Activated naive CD4-positive, alpha-beta T cell treated with anti-CD3 and anti-CD28 coated beads for 36 hours (primary cell): ENCODE measurements at regions of chr11 and their contacts with region 1.

Region 1: DNA sequence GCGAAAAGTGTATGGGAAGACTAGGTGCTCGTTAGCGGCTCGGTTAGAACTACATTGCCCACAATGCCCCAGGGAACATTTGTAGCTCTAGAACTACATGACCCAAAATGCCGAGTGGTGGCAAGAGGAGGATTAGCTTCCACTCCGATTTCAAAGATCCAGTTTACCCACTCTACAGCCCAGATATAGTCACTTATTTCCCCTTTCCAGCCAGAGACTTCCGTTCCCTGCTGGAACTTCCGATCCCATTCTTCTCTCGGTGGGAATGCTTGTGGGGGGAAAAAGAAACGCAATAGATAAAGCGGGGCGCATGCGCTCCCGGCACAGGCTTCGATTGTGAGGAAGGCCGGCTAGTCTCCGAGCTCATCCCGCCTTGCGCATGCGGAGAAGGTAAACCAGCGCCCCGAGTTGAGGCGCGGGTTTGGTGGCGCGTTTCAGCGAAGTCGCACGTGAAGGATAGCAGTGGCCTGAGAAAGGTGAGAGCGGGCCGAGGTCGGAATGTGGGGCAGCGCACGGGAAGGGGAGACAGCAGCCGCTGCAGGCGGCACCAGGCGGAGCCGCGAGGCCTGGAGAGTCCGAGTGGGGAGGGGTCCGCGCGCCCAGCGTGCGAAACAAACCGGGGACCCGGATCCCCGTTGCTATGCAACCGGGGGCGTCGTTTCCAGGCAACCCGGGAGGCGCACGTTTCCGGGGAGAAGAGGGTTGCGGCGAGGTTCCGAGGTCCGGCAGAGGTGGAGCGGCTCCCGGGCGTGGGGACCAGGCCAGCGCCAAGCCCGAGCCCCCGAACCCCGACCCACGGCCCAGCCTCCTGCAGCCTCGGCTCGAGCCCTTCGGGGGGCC is at the start of gene TMEM109:
- DNase-seq: peak; percentile 89
- H3K4me3 Mint-ChIP-seq: peak within 1 kb of the TSS; percentile 94
- H3K27ac Mint-ChIP-seq: peak within 1 kb of the TSS; percentile 95
- H3K4me1 Mint-ChIP-seq: peaks cover 62% of the 10 kb centered on the region
- H3K27me3 Mint-ChIP-seq: no peaks in the 10 kb centered on the region
- total RNA-seq, gene TMEM109: 94.0 to 103 TPM

Region 2: GRCh38 chr11:60939855-60940254 is 25.8 kb after region 1 on chr11:
- CTCF ChIA-PET with region 1: interaction called, 18 read pairs
- intact Hi-C with region 1: no loop called
- DNase-seq: no peak
- H3K4me3 Mint-ChIP-seq: no peak overlapping the region
- H3K27ac Mint-ChIP-seq: no peak overlapping the region
- H3K4me1 Mint-ChIP-seq: peaks cover 5% of the 10 kb centered on the region
- H3K27me3 Mint-ChIP-seq: no peaks in the 10 kb centered on the region

Region 3: GRCh38 chr11:61021661-61022212 is 107.7 kb after region 1 on chr11:
- CTCF ChIA-PET with region 1: no interaction called
- intact Hi-C with region 1: loop called (anchors 1 kb)
- DNase-seq: peak; percentile 97
- H3K4me3 Mint-ChIP-seq: peak overlapping the region; percentile 81
- H3K27ac Mint-ChIP-seq: peak overlapping the region; percentile 100
- H3K4me1 Mint-ChIP-seq: peaks cover 78% of the 10 kb centered on the region
- H3K27me3 Mint-ChIP-seq: no peaks in the 10 kb centered on the region

Region 4: DNA sequence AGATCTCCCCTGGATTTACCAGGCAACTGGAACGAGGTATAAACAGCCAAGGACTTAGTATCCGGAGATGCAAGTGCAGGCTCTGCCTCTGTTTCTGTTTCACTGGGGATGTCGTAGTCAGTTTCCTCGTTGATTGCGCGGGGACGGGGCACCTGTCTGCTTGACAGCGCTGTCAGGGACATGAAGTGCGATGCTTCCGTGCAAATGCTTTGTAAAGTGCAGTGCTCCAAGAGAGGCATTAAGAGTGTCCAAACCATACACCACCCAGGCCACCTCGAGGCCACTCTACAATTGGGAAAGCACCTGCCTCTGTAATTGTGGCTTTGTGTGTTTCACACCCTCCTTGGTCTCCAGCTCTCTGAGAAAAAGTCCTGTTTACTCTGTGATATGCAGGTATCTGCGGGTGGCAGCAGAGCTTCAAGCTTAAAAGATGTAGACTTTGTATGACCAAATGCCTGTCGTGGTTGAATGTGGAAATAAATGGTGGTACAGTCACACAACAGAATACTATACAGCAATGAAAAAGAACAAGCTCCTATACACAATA is 169.7 kb after region 1 on chr11:
- CTCF ChIA-PET with region 1: no interaction called
- intact Hi-C with region 1: loop called (anchors 2 kb)
- DNase-seq: peak; percentile 89
- H3K4me3 Mint-ChIP-seq: peak overlapping the region; percentile 76
- H3K27ac Mint-ChIP-seq: peak overlapping the region; percentile 99
- H3K4me1 Mint-ChIP-seq: peaks cover 70% of the 10 kb centered on the region
- H3K27me3 Mint-ChIP-seq: no peaks in the 10 kb centered on the region

Region 5: GRCh38 chr11:61161190-61162091 is 247.4 kb after region 1 on chr11 and contains the start of gene VPS37C:
- CTCF ChIA-PET with region 1: interaction called, 3 read pairs
- intact Hi-C with region 1: loop called (anchors 1 kb)
- DNase-seq: peak; percentile 91
- H3K4me3 Mint-ChIP-seq: peak within 1 kb of the TSS; percentile 94
- H3K27ac Mint-ChIP-seq: peak within 1 kb of the TSS; percentile 93
- H3K4me1 Mint-ChIP-seq: peaks cover 62% of the 10 kb centered on the region
- H3K27me3 Mint-ChIP-seq: no peaks in the 10 kb centered on the region
- total RNA-seq, gene VPS37C: 8.5 to 8.9 TPM